ENCODE measurements at regions of chr19 and their contacts with region 1.

Region 1: DNA sequence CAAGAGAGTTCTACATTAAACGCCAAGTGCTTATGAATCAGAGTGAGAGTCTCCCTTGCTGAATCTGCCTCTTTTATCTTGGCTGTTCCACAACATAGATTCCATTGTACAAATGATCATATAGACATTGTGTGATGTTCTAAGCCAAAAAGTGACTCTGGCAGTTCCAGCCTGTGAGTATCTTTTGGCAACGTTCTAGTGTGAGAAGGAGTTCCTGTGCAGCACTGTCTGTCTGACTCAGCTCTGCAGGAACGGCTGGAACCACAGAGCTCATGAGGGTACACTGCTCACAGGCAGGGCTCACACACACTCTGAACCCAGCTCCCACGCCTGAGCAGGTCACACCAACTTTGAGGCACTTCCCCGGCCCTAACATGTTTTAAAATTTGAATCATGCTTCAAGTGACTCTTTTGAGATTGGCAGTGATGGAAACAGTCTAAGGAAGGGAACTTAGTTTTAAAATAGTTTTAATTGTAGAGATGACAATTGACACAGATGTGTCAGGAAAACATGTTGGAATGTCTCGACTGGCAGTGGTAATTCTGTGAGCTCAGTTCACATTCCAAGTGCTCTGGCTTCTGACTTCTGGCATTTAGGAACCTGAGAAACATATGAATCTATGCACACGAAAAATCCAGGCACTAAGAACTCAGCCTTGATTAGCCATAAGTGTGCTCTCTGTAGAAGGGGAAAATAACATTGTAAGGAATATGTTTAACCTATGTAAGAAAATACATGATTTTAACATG is 272.0 kb downstream of the UQCRFS1 start:
- DNase-seq: no peak
- ATAC-seq: no peak
- H3K4me3 ChIP-seq: no peak overlapping the region
- H3K27ac ChIP-seq: no peak overlapping the region
- H3K4me1 ChIP-seq: no peaks in the 10 kb centered on the region
- H3K27me3 ChIP-seq: no peaks in the 10 kb centered on the region; a peak in 1 of 5 replicates
- CTCF ChIP-seq: no peak
- EP300 ChIP-seq: no peak
- POLR2A ChIP-seq: no peak
- RAD21 ChIP-seq: no peak

Region 2: GRCh38 chr19:29098863-29099519 is 158.1 kb after region 1 on chr19:
- CTCF ChIA-PET with region 1: no interaction called
- POLR2A ChIA-PET with region 1: no interaction called
- in situ Hi-C with region 1: no loop called
- intact Hi-C with region 1: no loop called
- DNase-seq: peak in 2 of 4 experiments; percentile 12 to 14
- ATAC-seq: peak; percentile 63; the same call in 2 of the 3 replicates
- H3K4me3 ChIP-seq: no peak overlapping the region
- H3K27ac ChIP-seq: no peak overlapping the region
- H3K4me1 ChIP-seq: peaks cover 0 to under 1% of the 10 kb centered on the region in 2 experiments; a peak in 2 of 5 replicates
- H3K27me3 ChIP-seq: peaks cover 0 to 7% of the 10 kb centered on the region in 2 experiments; a peak in 3 of 5 replicates
- CTCF ChIP-seq: no peak
- EP300 ChIP-seq: no peak
- POLR2A ChIP-seq: no peak
- RAD21 ChIP-seq: no peak

Region 3: GRCh38 chr19:29121684-29122083 is 180.8 kb after region 1 on chr19:
- CTCF ChIA-PET with region 1: no interaction called
- POLR2A ChIA-PET with region 1: no interaction called
- in situ Hi-C with region 1: no loop called
- intact Hi-C with region 1: loop called (anchors 1 kb)
- DNase-seq: peak; percentile 44 to 62 (median 58)
- ATAC-seq: peak; percentile 92
- H3K4me3 ChIP-seq: no peak overlapping the region
- H3K27ac ChIP-seq: no peak overlapping the region
- H3K4me1 ChIP-seq: no peaks in the 10 kb centered on the region
- H3K27me3 ChIP-seq: no peaks in the 10 kb centered on the region
- CTCF ChIP-seq: peak; percentile 61 to 75 (median 70)
- EP300 ChIP-seq: no peak
- POLR2A ChIP-seq: no peak
- RAD21 ChIP-seq: peak; percentile 48 to 68; a peak in 3 of 4 replicates

Region 4: DNA sequence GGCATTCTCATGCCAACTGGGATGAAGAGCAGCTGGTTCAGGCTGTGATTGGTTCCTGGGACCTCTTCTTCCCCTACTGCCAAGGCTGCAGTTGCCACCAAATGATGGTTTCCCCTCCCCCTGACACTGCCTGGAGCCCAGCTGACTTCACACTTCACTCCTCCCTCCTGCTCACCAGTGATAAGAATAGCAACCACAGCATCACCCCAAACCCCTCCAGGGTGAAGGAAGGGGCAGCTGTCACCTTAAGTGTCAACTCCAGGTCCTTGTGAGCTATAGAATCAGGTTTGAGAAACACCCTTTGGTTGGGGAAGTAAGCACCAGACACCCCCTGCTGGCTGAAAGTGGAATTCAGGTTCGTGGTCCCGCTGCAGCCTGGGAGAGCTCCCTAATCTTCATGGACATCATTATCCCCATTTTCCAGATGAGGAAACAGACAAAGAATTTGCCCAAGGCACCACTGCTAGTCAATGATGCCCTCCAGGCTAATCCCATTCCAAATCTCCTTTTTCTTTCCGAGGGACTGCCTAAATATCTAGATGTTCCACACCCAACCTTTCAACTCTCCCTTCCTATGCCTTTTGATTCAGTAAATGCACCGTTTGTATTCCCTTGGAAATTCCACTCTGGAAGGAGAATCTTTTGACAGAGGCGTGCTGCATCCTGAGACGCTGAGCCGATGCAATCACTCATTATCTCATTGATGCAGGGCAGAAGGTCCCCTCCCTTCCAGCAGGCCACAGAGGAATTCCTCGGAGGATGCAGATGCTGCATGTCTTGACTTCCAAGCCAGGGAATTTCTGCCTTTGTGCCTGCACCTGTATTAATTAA is 322.6 kb after region 1 on chr19:
- CTCF ChIA-PET with region 1: interaction called, 3 read pairs
- POLR2A ChIA-PET with region 1: no interaction called
- in situ Hi-C with region 1: no loop called
- intact Hi-C with region 1: loop called (anchors 1 kb)
- DNase-seq: peak; percentile 57 to 68 (median 60)
- ATAC-seq: peak; percentile 83
- H3K4me3 ChIP-seq: no peak overlapping the region
- H3K27ac ChIP-seq: no peak overlapping the region
- H3K4me1 ChIP-seq: no peaks in the 10 kb centered on the region
- H3K27me3 ChIP-seq: peaks cover 5 to 17% of the 10 kb centered on the region in 2 experiments; a peak in 3 of 5 replicates
- CTCF ChIP-seq: peak; percentile 68 to 82 (median 76)
- EP300 ChIP-seq: no peak
- POLR2A ChIP-seq: no peak
- RAD21 ChIP-seq: peak in 1 of 2 experiments; percentile 69; a peak in 2 of 4 replicates

Measured in K562 (cell line).